Panc1 (cell line): ENCODE measurements at regions of chr17 and their contacts with region 1.

Region 1: GRCh38 chr17:27106347-27106981 is 187.4 kb upstream of the WSB1 start:
- DNase-seq: no peak
- ATAC-seq: no peak
- H3K4me3 ChIP-seq: no peak overlapping the region
- H3K27ac ChIP-seq: no peak overlapping the region
- H3K4me1 ChIP-seq: no peaks in the 10 kb centered on the region
- H3K27me3 ChIP-seq: no peaks in the 10 kb centered on the region
- CTCF ChIP-seq: no peak

Region 2: GRCh38 chr17:27199948-27200347 is 93.5 kb after region 1 on chr17:
- CTCF ChIA-PET with region 1: no interaction called
- POLR2A ChIA-PET with region 1: no interaction called
- in situ Hi-C with region 1: no loop called
- intact Hi-C with region 1: loop called (anchors 10 kb)
- DNase-seq: no peak
- ATAC-seq: no peak
- H3K4me3 ChIP-seq: no peak overlapping the region
- H3K27ac ChIP-seq: no peak overlapping the region
- H3K4me1 ChIP-seq: no peaks in the 10 kb centered on the region
- H3K27me3 ChIP-seq: no peaks in the 10 kb centered on the region
- CTCF ChIP-seq: no peak

Region 3: GRCh38 chr17:27276653-27277156 is 170.2 kb after region 1 on chr17:
- CTCF ChIA-PET with region 1: no interaction called
- POLR2A ChIA-PET with region 1: no interaction called
- in situ Hi-C with region 1: no loop called
- intact Hi-C with region 1: no loop called
- DNase-seq: no peak
- ATAC-seq: no peak
- H3K4me3 ChIP-seq: no peak overlapping the region
- H3K27ac ChIP-seq: no peak overlapping the region
- H3K4me1 ChIP-seq: no peaks in the 10 kb centered on the region
- H3K27me3 ChIP-seq: no peaks in the 10 kb centered on the region
- CTCF ChIP-seq: no peak